ENCODE measurements at regions of chr19 and their contacts with region 1.

Region 1: GRCh38 chr19:17766543-17767131 is 15.4 kb downstream of the FCHO1 start:
- DNase-seq: peak; percentile 77
- ATAC-seq: peak; percentile 97
- H3K4me3 ChIP-seq: no peak overlapping the region
- H3K27ac ChIP-seq: no peak overlapping the region
- H3K4me1 ChIP-seq: no peaks in the 10 kb centered on the region
- H3K27me3 ChIP-seq: peaks cover 3% of the 10 kb centered on the region; the same call in 1 of the 2 replicates
- CTCF ChIP-seq: peak; percentile 81
- POLR2A ChIP-seq: no peak
- RAD21 ChIP-seq: peak; percentile 89

Region 2: DNA sequence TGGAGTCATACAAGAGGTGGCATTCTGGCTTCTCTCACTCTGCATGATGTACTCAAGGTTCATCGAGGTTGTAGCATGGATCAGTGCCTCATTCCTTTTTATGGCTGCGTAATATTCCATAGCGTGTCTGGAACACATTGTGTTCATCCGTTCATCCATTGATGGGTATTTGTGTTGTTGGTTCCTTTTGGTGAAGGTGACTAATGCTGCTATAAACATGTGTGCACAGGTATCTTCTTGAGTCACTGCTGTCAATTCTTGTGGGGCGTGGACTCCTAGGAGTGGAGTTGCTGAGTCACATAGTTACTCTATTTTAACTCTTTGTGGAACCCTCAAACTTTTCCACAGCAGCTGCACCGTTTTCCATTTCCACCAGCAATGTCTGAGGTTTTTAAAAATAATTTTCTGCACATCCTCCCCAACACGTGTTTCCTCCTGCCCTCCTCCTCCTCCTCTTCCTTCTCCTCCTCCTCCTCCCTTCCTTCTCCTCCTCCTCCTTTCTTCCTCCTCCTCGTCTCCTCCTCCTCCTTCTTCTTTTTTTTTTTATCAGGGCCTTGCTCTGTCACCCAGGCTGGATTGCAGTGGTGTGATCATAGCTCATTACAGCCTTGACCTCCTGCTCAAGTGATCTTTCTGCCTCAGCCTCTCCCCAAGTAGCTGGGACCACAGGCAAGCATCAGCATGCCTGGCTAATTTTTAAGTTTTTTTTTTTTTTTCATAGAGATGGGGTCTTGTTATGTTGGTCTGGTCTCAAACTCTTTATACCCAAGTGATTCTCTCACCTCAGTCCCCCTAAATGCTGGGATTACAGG is 316.2 kb before region 1 on chr19:
- CTCF ChIA-PET with region 1: no interaction called
- POLR2A ChIA-PET with region 1: no interaction called
- dilution Hi-C with region 1: no loop called
- in situ Hi-C with region 1: no loop called
- intact Hi-C with region 1: loop called (anchors 10 kb)
- DNase-seq: no peak
- ATAC-seq: no peak
- H3K4me3 ChIP-seq: no peak overlapping the region
- H3K27ac ChIP-seq: no peak overlapping the region
- H3K4me1 ChIP-seq: no peaks in the 10 kb centered on the region
- H3K27me3 ChIP-seq: peaks cover 22% of the 10 kb centered on the region
- CTCF ChIP-seq: no peak
- POLR2A ChIP-seq: no peak
- RAD21 ChIP-seq: no peak

Region 3: DNA sequence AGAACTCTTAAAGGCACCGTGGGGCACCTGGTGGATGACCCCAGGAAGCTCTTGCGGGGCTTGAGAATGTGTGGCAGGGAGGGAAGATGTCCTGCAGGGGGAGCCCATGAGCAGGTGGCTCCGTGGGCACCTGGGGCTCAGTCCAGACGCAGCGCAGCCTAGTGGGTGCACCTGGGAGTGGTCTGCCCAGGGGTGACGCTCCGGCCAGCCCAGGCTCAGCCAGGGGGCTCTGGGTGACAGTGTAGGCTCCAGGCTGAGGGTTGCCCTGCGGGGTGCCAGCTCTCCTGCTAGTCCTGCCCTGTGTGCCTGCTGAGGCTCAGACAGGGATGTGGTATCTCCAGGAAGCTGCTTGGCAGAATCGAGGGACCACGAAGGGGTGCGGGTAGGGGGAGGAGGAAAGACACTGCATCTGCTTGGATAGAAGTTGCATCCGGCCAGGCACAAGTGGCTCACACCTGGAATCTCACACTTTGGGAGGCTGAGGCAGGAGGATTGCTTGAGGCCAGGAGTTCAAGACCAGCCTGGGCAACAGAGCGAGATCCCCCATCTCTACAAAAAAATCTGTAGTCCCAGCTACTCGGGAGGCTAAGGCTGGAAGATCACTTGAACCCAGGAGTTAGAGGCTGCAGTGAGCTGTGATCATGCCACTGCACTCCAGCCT is 270.2 kb before region 1 on chr19:
- CTCF ChIA-PET with region 1: interaction called, 3 read pairs
- POLR2A ChIA-PET with region 1: no interaction called
- dilution Hi-C with region 1: no loop called
- in situ Hi-C with region 1: no loop called
- intact Hi-C with region 1: loop called (anchors 10 kb)
- DNase-seq: peak; percentile 52
- ATAC-seq: peak; percentile 83
- H3K4me3 ChIP-seq: no peak overlapping the region
- H3K27ac ChIP-seq: no peak overlapping the region
- H3K4me1 ChIP-seq: peaks cover 9% of the 10 kb centered on the region
- H3K27me3 ChIP-seq: no peaks in the 10 kb centered on the region
- CTCF ChIP-seq: peak; percentile 96
- POLR2A ChIP-seq: no peak
- RAD21 ChIP-seq: peak; percentile 64

Region 4: GRCh38 chr19:17703824-17704463 is 62.7 kb before region 1 on chr19:
- CTCF ChIA-PET with region 1: interaction called, 7 read pairs
- POLR2A ChIA-PET with region 1: no interaction called
- dilution Hi-C with region 1: no loop called
- in situ Hi-C with region 1: no loop called
- intact Hi-C with region 1: loop called (anchors 1 kb)
- DNase-seq: peak; percentile 31
- ATAC-seq: peak; percentile 67
- H3K4me3 ChIP-seq: no peak overlapping the region
- H3K27ac ChIP-seq: no peak overlapping the region
- H3K4me1 ChIP-seq: no peaks in the 10 kb centered on the region
- H3K27me3 ChIP-seq: peaks cover 5% of the 10 kb centered on the region; the same call in 1 of the 2 replicates
- CTCF ChIP-seq: peak; percentile 54
- POLR2A ChIP-seq: no peak
- RAD21 ChIP-seq: peak; percentile 45; the same call in 1 of the 2 replicates

Measured in IMR-90 (cell line).